BJ (cell line): ENCODE measurements at regions of chr2 and their contacts with region 1.

Region 1: DNA sequence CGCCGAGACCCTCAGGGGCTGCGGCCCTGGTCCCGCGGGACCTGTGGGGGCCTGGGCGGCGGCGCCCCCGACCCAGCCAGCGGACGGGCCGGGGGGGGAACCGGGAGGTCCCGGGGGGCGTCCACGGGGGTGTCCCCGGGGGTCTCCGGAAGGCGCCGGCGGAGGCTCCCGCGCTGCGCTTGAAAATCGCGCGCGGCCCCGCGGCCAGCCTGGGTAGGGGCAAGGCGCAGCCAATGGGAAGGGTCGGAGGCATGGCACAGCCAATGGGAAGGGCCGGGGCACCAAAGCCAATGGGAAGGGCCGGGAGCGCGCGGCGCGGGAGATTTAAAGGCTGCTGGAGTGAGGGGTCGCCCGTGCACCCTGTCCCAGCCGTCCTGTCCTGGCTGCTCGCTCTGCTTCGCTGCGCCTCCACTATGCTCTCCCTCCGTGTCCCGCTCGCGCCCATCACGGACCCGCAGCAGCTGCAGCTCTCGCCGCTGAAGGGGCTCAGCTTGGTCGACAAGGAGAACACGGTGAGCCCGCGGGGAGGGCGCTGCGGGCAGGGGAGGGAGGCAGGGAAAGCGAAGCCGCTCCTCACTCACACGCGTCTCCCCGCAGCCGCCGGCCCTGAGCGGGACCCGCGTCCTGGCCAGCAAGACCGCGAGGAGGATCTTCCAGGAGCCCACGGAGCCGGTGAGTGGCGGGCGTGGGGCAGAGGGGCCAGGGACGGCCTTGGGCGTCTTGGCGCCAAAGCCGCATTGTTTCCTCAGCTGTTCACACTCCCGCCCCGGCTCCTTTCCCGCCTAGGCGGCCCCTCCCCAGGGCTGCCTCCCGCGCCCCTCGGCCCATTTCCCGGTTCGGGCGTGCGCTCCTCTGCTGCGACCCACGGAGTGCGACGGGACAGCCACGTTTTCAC is at the start of gene RRM2:
- DNase-seq: no peak
- H3K4me3 ChIP-seq: peak within 1 kb of the TSS; percentile 80
- H3K27me3 ChIP-seq: no peaks in the 10 kb centered on the region
- CTCF ChIP-seq: no peak
- polyA plus RNA-seq, gene RRM2: 23.5 and 31.8 TPM in 2 replicates

Region 2: GRCh38 chr2:10135296-10136089 is 12.9 kb after region 1 on chr2:
- CTCF ChIA-PET with region 1: interaction called, 11 read pairs
- POLR2A ChIA-PET with region 1: no interaction called
- DNase-seq: no peak
- H3K4me3 ChIP-seq: no peak overlapping the region
- H3K27me3 ChIP-seq: no peaks in the 10 kb centered on the region
- CTCF ChIP-seq: no peak

Region 3: DNA sequence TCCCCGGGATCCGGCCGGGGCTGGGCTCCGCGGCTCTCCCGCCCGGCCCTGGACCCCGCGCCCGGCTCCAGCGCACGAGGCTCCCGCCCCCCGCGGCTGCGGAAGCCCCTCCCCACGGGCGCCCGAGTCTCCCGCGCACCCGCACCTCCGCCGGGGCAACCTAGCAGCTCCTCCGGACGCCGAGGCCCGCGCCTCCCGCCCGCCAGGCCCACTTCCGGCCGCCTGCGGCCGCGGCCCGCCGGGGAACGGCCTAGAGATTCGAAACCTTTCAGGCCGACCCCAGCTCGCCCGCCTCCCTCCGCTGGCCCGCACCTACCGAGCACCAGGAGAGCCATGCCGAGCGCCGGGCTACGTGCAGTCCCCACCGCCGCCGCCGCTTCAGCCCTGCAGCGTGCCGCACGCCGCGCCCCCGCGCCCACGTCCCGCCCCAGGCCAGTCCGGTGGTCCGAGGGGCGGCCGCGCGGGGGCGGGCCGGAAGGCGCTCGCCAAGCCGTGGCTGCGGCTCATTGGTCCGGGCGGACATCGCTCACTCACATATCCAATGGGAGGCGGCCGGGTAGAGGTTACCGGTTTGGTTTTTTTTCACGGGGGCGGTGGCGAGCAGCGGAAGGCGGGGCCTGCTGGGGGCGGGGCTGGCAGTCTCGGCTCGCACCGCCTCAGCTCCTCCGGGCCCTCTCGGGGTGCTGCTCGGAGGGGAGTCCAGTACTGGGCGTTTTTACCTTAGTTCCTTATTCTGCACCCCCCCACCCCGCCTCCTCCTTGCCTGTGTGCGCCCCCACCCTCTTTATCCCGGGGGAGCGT is 689.9 kb after region 1 on chr2 and contains the start of gene PDIA6:
- CTCF ChIA-PET with region 1: no interaction called
- POLR2A ChIA-PET with region 1: interaction called, 16 read pairs
- DNase-seq: peak; percentile 70
- H3K4me3 ChIP-seq: peak within 1 kb of the TSS; percentile 82
- H3K27me3 ChIP-seq: 0 out of 2 replicates have a peak, but pooled peaks cover 2% of the 10 kb centered on the region
- CTCF ChIP-seq: no peak
- polyA plus RNA-seq, gene PDIA6: 238 and 364 TPM in 2 replicates